Activated T-helper 2 cell treated with anti-CD3 and anti-CD28 coated beads, Interferon-gamma antibody, Interleukin-2, Interleukin-4, amounts not matched to agents 10 μg/mL and 5 μg/mL and 100 μg/mL, durations not matched to agents 14 hours and 24 hours and 36 hours (primary cell): ENCODE measurements at regions of chr10 and their contacts with region 1.

Region 1: DNA sequence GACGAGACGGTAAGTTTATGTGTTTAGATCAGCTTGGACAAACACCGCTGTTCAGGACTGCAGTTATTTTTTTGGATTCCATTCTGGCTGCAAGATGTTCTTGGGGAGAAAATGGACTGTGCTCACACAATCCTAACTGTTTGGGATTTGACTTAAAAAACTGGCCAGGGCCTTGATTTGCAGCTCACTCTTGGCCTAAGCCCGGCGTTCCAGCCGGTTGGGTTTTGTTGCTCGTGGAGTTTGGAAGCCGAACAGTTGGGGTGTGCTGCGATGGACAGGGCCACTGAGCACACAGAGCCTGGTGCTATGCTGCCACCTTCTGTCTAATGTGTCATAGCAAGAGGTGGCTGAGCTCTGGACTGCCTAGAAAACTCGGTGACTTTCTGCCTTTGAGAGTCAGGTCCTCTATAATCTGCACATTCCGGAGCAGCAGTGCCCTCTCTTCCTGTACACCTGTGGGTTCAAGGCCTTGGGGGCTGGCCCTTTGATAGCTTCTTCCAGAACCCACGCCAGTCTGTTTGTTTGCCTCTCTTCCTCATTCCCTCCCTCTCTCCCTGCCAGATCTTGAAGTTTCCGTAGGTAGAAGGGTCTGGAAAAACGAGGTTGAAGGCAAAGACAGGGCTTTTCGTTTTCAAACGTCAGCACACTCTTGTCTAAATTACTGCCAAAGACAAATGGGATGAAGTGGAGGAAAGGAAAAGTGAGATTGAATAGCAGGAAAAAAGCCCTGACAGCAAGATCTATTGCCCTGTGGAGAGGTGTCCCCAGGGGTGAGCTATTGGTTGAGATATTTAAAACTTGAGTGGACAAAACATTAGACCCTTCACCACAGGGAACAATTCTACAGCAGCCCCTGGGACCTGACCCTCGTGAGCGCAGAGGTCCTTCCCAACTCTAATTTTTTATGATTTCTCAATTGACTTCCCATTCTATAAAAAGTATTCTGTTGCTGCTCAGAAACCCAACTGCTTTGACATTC is 167.5 kb upstream of the HABP2 start:
- DNase-seq: peak; percentile 14
- H3K4me3 Mint-ChIP-seq: no peak overlapping the region
- H3K27ac Mint-ChIP-seq: no peak overlapping the region
- H3K4me1 Mint-ChIP-seq: peaks cover 11% of the 10 kb centered on the region
- H3K27me3 Mint-ChIP-seq: peaks cover 46% of the 10 kb centered on the region

Region 2: DNA sequence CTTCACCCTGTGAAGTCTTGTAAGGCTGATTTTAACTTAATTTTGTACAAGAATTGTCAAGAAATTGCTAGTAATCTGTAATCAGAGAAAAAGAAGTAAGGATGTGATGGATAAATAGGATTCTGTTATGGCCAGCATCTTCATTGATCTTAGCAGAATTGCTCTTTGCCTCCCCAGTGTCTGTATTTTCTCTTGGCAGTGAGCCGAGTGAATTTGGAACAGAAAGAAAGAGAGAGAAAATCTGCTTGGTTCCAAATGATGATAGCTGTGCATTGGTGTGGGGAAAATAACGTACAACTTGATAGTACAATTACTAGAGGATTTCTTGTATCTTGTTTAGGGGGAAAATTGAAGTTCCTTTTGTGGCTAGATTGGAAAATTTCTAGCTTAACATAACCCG is 903.7 kb before region 1 on chr10:
- intact Hi-C with region 1: loop called (anchors 10 kb)
- DNase-seq: no peak
- H3K4me3 Mint-ChIP-seq: no peak overlapping the region
- H3K27ac Mint-ChIP-seq: no peak overlapping the region
- H3K4me1 Mint-ChIP-seq: no peaks in the 10 kb centered on the region
- H3K27me3 Mint-ChIP-seq: no peaks in the 10 kb centered on the region

Region 3: DNA sequence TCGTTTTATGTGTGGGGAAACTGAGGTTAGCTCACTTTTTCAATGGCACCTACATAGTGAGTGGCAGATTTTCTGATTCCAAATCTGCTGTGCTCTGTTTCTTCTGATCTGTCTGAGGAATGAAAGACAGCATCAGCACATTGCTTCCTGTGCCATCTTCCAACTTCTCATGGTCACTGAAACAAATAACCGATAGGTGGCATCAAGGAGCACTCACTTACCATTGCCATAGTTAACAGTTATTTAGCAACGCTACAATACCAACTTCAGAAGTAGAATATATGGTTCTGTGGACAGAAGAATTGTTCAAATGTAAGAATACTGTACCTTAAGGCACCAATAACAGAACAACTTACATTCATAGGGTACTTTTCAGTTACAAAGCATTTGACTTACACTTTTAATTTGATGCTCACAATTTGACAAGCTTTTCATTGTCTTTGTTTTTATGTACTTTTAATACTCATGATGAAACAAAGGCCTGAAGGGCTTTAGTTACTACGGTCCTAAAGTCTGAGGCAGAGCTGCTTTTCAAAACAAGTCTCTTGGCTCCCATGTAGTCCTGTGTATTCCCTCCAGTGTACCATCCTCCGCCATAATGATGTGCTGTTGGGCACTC is 664.1 kb before region 1 on chr10:
- intact Hi-C with region 1: loop called (anchors 5 kb)
- DNase-seq: no peak
- H3K4me3 Mint-ChIP-seq: no peak overlapping the region
- H3K27ac Mint-ChIP-seq: no peak overlapping the region
- H3K4me1 Mint-ChIP-seq: no peaks in the 10 kb centered on the region
- H3K27me3 Mint-ChIP-seq: no peaks in the 10 kb centered on the region

Region 4: DNA sequence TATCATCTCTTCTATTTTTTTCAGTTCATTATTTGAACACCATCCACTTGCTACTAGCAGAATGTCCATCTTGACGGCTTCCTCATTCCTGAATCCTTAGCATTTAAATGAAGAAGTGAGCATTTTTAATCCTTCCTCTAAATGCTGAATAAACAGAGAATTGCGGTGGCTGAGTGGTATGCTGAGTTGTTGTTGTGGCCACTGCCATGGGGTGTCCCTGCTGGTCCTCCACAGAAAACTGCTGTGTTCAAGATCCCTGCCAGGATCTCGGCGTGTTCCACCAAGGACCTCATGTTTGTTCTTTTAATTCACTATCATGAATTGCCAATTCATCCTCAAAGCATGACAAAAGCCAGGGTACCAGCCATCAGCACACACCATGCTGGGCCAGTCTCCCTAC is 118.6 kb after region 1 on chr10:
- intact Hi-C with region 1: no loop called
- DNase-seq: no peak
- H3K4me3 Mint-ChIP-seq: no peak overlapping the region
- H3K27ac Mint-ChIP-seq: no peak overlapping the region
- H3K4me1 Mint-ChIP-seq: no peaks in the 10 kb centered on the region
- H3K27me3 Mint-ChIP-seq: no peaks in the 10 kb centered on the region